Breast epithelium (tissue), 4 donors: ENCODE measurements at regions of chr1 and their contacts with region 1.

Region 1: GRCh38 chr1:29415156-29415830 is 179.0 kb downstream of the PTPRU start:
- DNase-seq: no peak
- H3K4me3 ChIP-seq: no peak overlapping the region
- H3K27ac ChIP-seq: no peak overlapping the region
- H3K4me1 ChIP-seq: no peaks in the 10 kb centered on the region
- H3K27me3 ChIP-seq: no peaks in the 10 kb centered on the region
- CTCF ChIP-seq: no peak
- POLR2A ChIP-seq: no peak

Region 2: GRCh38 chr1:29490204-29490934 is 75.1 kb after region 1 on chr1:
- intact Hi-C with region 1: no loop called
- DNase-seq: peak in 1 of 2 donors; percentile 7
- H3K4me3 ChIP-seq: no peak overlapping the region
- H3K27ac ChIP-seq: no peak overlapping the region
- H3K4me1 ChIP-seq: no peaks in the 10 kb centered on the region
- H3K27me3 ChIP-seq: peaks cover 0 to 6% of the 10 kb centered on the region in 2 donors
- CTCF ChIP-seq: no peak
- POLR2A ChIP-seq: no peak

Region 3: GRCh38 chr1:30342535-30343141 is 927.3 kb after region 1 on chr1:
- intact Hi-C with region 1: loop called (anchors 5 kb)
- DNase-seq: no peak
- H3K4me3 ChIP-seq: no peak overlapping the region
- H3K27ac ChIP-seq: no peak overlapping the region
- H3K4me1 ChIP-seq: no peaks in the 10 kb centered on the region
- H3K27me3 ChIP-seq: peaks cover 4 to 21% of the 10 kb centered on the region in 2 donors
- CTCF ChIP-seq: no peak
- POLR2A ChIP-seq: no peak